ENCODE measurements at regions of chr18 and their contacts with region 1.

Region 1: GRCh38 chr18:3579701-3580100 is 129.7 kb downstream of the TGIF1 start:
- DNase-seq: peak; percentile 62
- H3K4me3 ChIP-seq: no peak overlapping the region
- CTCF ChIP-seq: no peak

Region 2: GRCh38 chr18:3368193-3368592 is 211.5 kb before region 1 on chr18:
- in situ Hi-C with region 1: no loop called
- DNase-seq: peak; percentile 87
- H3K4me3 ChIP-seq: peak overlapping the region; percentile 4
- CTCF ChIP-seq: no peak

Region 3: DNA sequence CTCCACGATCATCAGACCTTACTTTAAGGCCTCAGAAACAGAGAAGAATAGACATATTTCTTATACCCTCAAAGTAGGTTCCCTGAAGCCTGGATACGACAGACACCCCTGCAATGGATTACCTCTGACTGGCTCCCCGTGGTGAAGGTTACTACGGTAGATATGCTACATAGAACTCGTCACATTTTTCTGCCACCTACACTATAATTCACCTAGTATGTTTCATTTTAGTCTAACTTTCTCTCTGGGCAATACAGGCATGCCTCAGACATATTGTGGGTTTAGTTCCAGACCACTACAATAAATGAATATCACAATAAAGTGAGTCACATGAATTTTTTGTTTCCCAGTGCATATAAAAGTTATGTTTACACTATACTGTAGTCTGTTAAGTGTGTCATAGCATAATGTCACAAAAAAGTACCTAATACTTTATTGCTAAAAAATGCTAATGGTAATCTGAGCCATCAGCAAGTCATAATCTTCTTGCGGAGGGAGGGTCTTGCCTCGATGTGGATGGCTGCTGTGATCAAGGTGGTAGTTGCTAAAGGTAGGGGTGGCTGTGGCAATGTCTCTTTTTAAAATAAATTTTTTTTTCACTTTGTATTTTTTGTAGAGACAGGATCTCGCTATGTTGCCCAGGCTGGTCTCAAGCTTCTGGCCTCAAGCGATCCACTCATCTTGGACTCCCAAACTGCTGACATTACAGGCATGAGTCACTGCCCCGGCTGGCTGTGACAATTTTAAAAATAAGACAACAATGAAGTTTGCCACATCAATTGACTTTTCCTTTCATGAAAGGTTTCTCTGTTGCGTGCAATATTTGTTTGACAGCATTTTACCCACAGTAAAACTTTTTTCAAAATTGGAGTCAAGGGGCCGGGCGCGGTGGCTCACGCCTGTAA is 65.1 kb before region 1 on chr18:
- in situ Hi-C with region 1: loop called (anchors 5 kb)
- DNase-seq: no peak
- H3K4me3 ChIP-seq: no peak overlapping the region
- CTCF ChIP-seq: no peak

Region 4: DNA sequence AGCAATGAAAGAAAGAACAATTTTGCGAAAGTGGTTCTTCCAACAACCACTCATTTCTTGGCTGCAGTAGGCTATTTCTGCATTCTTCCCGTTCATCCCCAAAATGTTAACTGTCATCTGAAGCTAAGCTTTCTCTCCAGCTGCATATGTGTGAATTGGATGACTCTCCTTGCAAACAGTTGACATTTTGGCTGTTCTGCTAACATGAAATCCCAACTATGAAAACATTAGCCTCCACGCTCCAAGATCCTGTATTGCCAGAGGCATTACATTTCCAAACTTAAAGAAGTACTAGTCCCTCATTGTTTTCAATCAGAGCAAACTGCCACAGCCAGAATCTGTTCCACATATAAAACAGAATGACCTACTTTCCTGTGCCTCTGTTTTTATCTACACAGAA is 41.2 kb before region 1 on chr18:
- in situ Hi-C with region 1: no loop called
- DNase-seq: no peak
- H3K4me3 ChIP-seq: no peak overlapping the region
- CTCF ChIP-seq: no peak